ENCODE measurements at regions of chr6 and their contacts with region 1.

Region 1: GRCh38 chr6:118618679-118619377 is 32.6 kb downstream of the CEP85L start:
- DNase-seq: peak; percentile 63
- ATAC-seq: peak; percentile 91
- H3K4me3 ChIP-seq: no peak overlapping the region
- H3K4me3 Mint-ChIP-seq: no peak overlapping the region
- H3K27ac ChIP-seq: no peak overlapping the region
- H3K27ac Mint-ChIP-seq: peak overlapping the region; percentile 38
- H3K4me1 ChIP-seq: peaks cover 0 to 9% of the 10 kb centered on the region in 2 donors
- H3K4me1 Mint-ChIP-seq: peaks cover 21% of the 10 kb centered on the region
- H3K27me3 ChIP-seq: no peaks in the 10 kb centered on the region
- H3K27me3 Mint-ChIP-seq: no peaks in the 10 kb centered on the region
- CTCF ChIP-seq: peak; percentile 89

Region 2: GRCh38 chr6:118283766-118284165 is 335.1 kb before region 1 on chr6:
- CTCF ChIA-PET with region 1: interaction called, 3 read pairs
- POLR2A ChIA-PET with region 1: no interaction called
- intact Hi-C with region 1: loop called (anchors 2 kb)
- DNase-seq: peak; percentile 23
- ATAC-seq: no peak
- H3K4me3 ChIP-seq: no peak overlapping the region
- H3K4me3 Mint-ChIP-seq: no peak overlapping the region
- H3K27ac ChIP-seq: no peak overlapping the region
- H3K27ac Mint-ChIP-seq: no peak overlapping the region
- H3K4me1 ChIP-seq: no peaks in the 10 kb centered on the region
- H3K4me1 Mint-ChIP-seq: no peaks in the 10 kb centered on the region
- H3K27me3 ChIP-seq: no peaks in the 10 kb centered on the region
- H3K27me3 Mint-ChIP-seq: peaks cover 12% of the 10 kb centered on the region
- CTCF ChIP-seq: peak; percentile 32

Region 3: GRCh38 chr6:118574051-118574865 is 44.6 kb before region 1 on chr6:
- CTCF ChIA-PET with region 1: no interaction called
- POLR2A ChIA-PET with region 1: no interaction called
- intact Hi-C with region 1: no loop called
- DNase-seq: no peak
- ATAC-seq: no peak
- H3K4me3 ChIP-seq: no peak overlapping the region
- H3K4me3 Mint-ChIP-seq: no peak overlapping the region
- H3K27ac ChIP-seq: no peak overlapping the region
- H3K27ac Mint-ChIP-seq: no peak overlapping the region
- H3K4me1 ChIP-seq: no peaks in the 10 kb centered on the region
- H3K4me1 Mint-ChIP-seq: no peaks in the 10 kb centered on the region
- H3K27me3 ChIP-seq: no peaks in the 10 kb centered on the region
- H3K27me3 Mint-ChIP-seq: no peaks in the 10 kb centered on the region
- CTCF ChIP-seq: no peak

Measured in B cell (primary cell).